Activated T-helper 1 cell treated with anti-CD3 and anti-CD28 coated beads, Interleukin-12 subunit alpha, Interleukin-12 subunit beta, Interleukin-2, Interleukin-4 antibody, amounts not matched to agents 30 ng/mL and 10 ng/mL and 1 ng/mL, durations not matched to agents 14 hours and 24 hours and 36 hours (primary cell): ENCODE measurements at regions of chr18 and their contacts with region 1.

Region 1: DNA sequence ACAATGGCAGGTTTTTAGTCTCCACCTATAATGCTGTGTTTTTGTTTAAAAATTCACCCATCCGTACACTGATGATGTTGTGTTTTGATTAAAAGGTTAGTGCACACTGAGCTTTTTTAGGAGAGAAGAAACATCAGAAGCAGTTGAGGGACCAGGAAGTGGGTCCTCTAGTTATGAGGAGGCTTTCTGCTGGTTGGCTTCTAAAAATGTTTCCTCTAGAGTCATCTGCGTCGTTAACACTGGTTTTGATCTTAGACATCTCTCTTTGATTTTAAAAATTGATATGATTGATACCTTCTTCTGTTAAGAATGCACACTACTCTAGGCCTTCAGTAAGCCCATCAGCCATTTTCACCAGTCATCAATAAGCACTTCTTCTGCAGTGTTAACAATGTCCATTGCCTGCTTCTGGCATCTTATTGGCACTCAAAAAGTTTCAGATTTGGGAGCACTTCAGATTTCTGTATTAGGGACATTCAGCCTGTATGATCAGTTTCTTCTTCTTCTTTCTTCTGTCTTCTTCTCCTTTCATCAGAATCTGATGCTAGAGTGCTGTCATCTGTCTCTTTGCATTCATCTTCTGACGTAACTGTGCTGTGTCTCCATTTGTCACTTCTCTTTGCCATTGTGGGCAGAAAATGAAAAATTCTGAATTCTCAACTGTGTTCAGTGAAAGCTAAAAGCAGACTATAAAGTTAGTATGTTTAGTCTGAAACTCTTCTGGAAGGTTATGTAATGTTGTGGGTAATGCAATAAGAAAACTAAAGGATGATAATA is 56.3 kb downstream of the PHLPP1 start:
- DNase-seq: no peak
- H3K4me3 Mint-ChIP-seq: no peak overlapping the region
- H3K27ac Mint-ChIP-seq: peak overlapping the region; percentile 20
- H3K4me1 Mint-ChIP-seq: peaks cover 29% of the 10 kb centered on the region
- H3K27me3 Mint-ChIP-seq: no peaks in the 10 kb centered on the region

Region 2: DNA sequence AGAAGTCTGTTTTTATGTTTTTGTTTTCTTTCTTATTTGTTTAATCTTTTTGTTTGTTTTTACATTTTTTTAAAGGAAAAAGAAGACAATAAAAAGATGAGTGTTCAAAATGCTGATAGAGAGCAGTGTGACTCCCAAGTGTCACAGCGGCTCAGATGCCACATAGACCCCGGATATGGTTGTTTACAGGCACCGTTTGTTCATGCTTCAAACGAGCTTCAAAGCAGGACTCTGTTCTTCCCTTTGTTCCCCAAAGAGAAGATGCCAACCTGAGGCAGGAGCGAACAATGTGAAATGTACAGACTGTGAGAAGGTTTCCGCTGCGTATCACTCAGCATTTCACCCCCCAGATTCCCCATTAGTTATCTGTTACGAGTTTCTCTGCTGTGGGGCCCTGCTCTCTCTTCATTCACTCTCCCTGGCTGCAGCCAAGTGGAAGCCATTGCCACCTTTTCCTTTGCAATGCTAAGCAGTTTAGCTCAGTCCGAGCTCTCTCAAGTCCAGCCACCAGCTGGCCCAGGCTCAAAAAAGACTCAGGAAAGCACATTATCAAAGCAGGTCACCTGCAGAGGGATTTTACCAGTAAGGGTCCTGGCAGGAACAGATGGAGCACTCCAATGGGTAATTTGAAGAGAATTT is 92.7 kb before region 1 on chr18:
- intact Hi-C with region 1: no loop called
- DNase-seq: no peak
- H3K4me3 Mint-ChIP-seq: no peak overlapping the region
- H3K27ac Mint-ChIP-seq: no peak overlapping the region
- H3K4me1 Mint-ChIP-seq: no peaks in the 10 kb centered on the region
- H3K27me3 Mint-ChIP-seq: peaks cover 11% of the 10 kb centered on the region

Region 3: DNA sequence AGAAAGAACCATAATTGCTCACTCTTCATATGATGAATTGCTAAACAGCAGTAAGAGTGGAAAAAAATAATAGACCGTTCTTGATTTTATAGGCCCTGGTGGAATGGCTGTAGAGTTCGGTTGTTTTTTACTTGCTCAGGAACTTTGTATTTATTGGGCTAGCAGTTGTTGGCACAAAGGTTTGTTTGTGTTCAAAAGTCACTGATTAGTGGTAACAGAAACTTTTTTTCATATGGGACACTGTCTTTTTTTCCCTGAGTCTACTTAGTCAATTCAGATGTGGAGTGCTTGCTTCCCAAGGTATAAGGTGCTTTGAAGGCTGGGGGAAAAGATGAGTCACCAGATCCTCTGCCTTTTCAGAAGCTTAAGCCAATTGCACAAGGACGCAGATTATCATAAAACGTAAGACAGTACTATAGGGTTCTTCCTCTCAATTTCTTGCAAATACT is 30.5 kb before region 1 on chr18:
- intact Hi-C with region 1: loop called (anchors 1 kb)
- DNase-seq: no peak
- H3K4me3 Mint-ChIP-seq: no peak overlapping the region
- H3K27ac Mint-ChIP-seq: peak overlapping the region; percentile 24
- H3K4me1 Mint-ChIP-seq: peaks cover 10% of the 10 kb centered on the region
- H3K27me3 Mint-ChIP-seq: no peaks in the 10 kb centered on the region

Region 4: GRCh38 chr18:62759704-62760402 is 11.8 kb before region 1 on chr18:
- intact Hi-C with region 1: no loop called
- DNase-seq: no peak
- H3K4me3 Mint-ChIP-seq: no peak overlapping the region
- H3K27ac Mint-ChIP-seq: no peak overlapping the region
- H3K4me1 Mint-ChIP-seq: peaks cover 6% of the 10 kb centered on the region
- H3K27me3 Mint-ChIP-seq: no peaks in the 10 kb centered on the region

Region 5: DNA sequence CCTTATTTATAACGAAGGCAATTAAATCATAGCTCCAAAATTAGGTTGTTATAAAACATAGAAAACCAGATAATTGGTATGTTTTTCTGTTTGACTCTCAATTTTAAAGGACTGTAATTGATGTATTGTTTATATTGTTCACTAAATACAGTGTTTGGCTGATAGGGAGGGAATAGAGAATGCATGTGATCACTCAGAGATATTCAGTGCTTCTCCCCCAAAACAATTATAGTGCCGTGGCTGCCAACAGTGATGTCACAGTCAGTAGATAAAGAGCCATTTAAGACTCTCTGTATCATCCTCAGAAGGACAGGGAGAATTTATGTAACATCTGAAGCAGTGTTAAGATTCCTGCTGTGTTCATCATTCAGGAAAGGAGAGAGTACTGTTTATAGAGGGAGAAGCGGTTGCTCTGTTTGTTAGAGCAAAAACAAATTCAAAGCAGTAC is 13.3 kb after region 1 on chr18:
- intact Hi-C with region 1: loop called (anchors 1 kb)
- DNase-seq: no peak
- H3K4me3 Mint-ChIP-seq: no peak overlapping the region
- H3K27ac Mint-ChIP-seq: no peak overlapping the region
- H3K4me1 Mint-ChIP-seq: peaks cover 36% of the 10 kb centered on the region
- H3K27me3 Mint-ChIP-seq: no peaks in the 10 kb centered on the region